B cell (primary cell): ENCODE measurements at regions of chr4 and their contacts with region 1.

Region 1: DNA sequence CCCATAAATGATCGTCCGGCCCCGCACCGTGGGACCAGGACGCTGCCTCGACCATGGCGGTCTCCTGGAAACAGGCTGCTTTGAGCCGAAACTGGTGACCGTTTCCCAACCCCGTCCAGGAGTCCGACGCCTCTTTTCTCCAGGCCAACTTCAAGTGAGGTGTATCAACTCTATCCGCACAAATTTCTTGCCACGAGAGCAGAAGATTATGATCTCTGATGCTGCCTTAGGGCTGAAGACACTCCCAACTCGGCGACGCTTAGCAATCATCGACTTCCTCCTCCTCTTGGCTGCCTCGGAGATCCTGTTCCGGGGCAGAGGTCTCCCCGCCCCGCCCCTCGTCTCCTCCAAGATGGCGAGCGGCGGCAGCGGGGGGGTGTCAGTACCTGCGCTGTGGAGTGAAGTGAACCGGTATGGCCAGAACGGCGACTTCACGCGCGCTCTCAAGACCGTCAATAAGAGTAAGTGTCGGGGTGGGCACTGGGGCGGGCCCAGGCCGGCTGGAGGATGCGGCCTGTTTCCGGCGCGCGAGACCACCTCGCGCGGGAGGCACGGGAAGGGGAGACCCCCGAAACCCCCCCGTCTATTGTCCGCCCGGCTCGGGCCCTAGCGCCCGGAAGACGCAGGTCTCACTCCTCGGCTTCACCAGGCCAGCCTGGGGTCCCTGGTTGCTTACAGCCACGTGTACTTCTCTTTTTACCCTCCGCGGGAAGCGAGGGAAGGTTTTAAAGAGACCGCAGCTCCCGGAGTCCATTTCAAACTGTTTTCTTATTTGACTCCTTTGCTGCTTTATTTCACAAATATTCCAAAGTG is at the start of gene SRP72:
- DNase-seq: peak; percentile 91
- ATAC-seq: peak; percentile 96
- H3K4me3 ChIP-seq: peak within 1 kb of the TSS; percentile 83 to 97 (median 89)
- H3K4me3 Mint-ChIP-seq: peak within 1 kb of the TSS; percentile 99
- H3K27ac ChIP-seq: peak within 1 kb of the TSS; percentile 73 to 81
- H3K27ac Mint-ChIP-seq: peak within 1 kb of the TSS; percentile 96
- H3K4me1 ChIP-seq: peaks cover 38 to 42% of the 10 kb centered on the region in 2 donors
- H3K4me1 Mint-ChIP-seq: peaks cover 56% of the 10 kb centered on the region
- H3K27me3 ChIP-seq: no peaks in the 10 kb centered on the region
- H3K27me3 Mint-ChIP-seq: no peaks in the 10 kb centered on the region
- CTCF ChIP-seq: no peak
- total RNA-seq, gene SRP72: 111 and 114 TPM in 2 replicates

Region 2: DNA sequence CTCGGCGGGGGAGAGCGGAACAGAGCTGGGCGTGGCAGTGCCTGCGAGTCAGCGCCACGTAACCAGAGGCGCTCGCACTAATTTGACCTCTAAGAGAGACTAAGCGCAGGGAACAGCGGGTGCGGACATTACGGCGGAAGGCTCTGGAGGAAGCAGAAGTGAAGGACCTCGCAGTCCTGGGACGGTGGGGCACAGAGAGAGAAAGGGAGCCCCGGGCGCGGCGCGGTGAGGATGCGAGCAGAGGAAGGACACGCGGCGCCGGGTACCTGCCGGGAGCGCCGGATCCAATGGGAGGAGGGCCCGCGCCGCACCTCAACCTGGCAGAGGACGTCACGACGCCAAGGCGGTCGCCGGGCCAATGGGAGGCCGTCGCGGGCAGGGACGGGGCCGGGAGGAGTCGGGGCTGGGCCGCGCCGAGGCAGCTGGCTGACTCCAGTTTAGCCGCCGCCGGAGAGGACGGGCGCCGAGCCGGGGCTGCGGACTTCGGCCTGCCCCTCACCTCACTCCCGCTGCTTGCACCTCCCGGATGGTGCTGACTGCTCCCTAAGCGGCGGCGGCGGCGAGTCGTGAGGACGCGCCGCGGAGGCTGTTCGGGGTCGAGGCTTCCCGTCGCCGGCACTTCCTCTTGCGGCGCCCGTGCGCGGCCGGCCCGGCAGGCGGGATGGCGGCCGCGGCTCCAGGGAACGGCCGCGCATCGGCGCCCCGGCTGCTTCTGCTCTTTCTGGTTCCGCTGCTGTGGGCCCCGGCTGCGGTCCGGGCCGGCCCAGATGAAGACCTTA is 1071.8 kb before region 1 on chr4 and contains the start of gene TMEM165:
- CTCF ChIA-PET with region 1: no interaction called
- POLR2A ChIA-PET with region 1: no interaction called
- intact Hi-C with region 1: loop called (anchors 10 kb)
- DNase-seq: peak; percentile 94
- ATAC-seq: peak; percentile 91
- H3K4me3 ChIP-seq: peak within 1 kb of the TSS; percentile 67 to 94 (median 77)
- H3K4me3 Mint-ChIP-seq: peak within 1 kb of the TSS; percentile 97
- H3K27ac ChIP-seq: peak within 1 kb of the TSS; percentile 91 to 93
- H3K27ac Mint-ChIP-seq: peak within 1 kb of the TSS; percentile 97
- H3K4me1 ChIP-seq: peaks cover 28 to 33% of the 10 kb centered on the region in 2 donors
- H3K4me1 Mint-ChIP-seq: peaks cover 39% of the 10 kb centered on the region
- H3K27me3 ChIP-seq: no peaks in the 10 kb centered on the region
- H3K27me3 Mint-ChIP-seq: no peaks in the 10 kb centered on the region
- CTCF ChIP-seq: no peak
- total RNA-seq, gene TMEM165: 110 and 113 TPM in 2 replicates

Region 3: DNA sequence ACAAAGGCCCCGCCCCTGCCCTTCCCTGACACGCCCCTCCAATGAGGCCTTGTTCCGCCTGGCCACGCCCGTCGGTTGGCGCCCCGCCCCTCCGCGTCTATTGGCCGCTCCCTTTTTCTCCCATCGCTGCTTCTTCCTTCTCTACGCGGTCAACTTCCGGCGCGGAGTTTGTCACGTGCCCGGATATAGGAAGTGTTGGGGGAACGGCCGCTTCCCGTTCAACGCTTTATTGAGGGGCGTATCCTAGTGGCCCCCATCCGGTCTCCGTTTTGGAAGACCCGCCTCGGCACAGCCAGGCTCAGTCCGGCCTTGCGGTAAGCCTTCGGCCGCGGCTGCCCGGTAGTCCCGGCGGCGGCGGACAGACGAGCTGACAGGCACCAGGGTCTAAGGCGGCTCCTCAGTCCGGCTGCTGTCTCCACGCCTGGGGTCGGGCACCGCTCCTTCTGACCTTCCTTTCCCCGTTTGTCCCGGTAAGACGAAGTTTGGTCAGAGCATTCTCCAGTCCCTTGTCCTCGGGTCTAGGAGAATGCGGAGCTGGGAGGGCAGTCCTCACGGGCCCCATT is 613.9 kb before region 1 on chr4 and contains the start of gene EXOC1:
- CTCF ChIA-PET with region 1: no interaction called
- POLR2A ChIA-PET with region 1: no interaction called
- intact Hi-C with region 1: loop called (anchors 10 kb)
- DNase-seq: peak; percentile 97
- ATAC-seq: peak; percentile 100
- H3K4me3 ChIP-seq: peak within 1 kb of the TSS; percentile 85 to 98 (median 97)
- H3K4me3 Mint-ChIP-seq: no peak within 1 kb of the TSS
- H3K27ac ChIP-seq: peak within 1 kb of the TSS; percentile 71 to 86
- H3K27ac Mint-ChIP-seq: peak within 1 kb of the TSS; percentile 94
- H3K4me1 ChIP-seq: peaks cover 11 to 12% of the 10 kb centered on the region in 2 donors
- H3K4me1 Mint-ChIP-seq: peaks cover 13% of the 10 kb centered on the region
- H3K27me3 ChIP-seq: peaks cover 0 to 14% (median 2%) of the 10 kb centered on the region in 4 experiments
- H3K27me3 Mint-ChIP-seq: peaks cover 12% of the 10 kb centered on the region
- CTCF ChIP-seq: no peak
- total RNA-seq, gene EXOC1: 42.5 and 46.7 TPM in 2 replicates

Region 4: GRCh38 chr4:56400560-56400959 is 66.9 kb before region 1 on chr4:
- CTCF ChIA-PET with region 1: no interaction called
- POLR2A ChIA-PET with region 1: no interaction called
- intact Hi-C with region 1: no loop called
- DNase-seq: no peak
- ATAC-seq: no peak
- H3K4me3 ChIP-seq: no peak overlapping the region
- H3K4me3 Mint-ChIP-seq: no peak overlapping the region
- H3K27ac ChIP-seq: no peak overlapping the region
- H3K27ac Mint-ChIP-seq: no peak overlapping the region
- H3K4me1 ChIP-seq: no peaks in the 10 kb centered on the region
- H3K4me1 Mint-ChIP-seq: no peaks in the 10 kb centered on the region
- H3K27me3 ChIP-seq: no peaks in the 10 kb centered on the region
- H3K27me3 Mint-ChIP-seq: no peaks in the 10 kb centered on the region
- CTCF ChIP-seq: no peak

Region 5: GRCh38 chr4:56435306-56435926 is 32.1 kb before region 1 on chr4 and contains the start of gene PPAT:
- CTCF ChIA-PET with region 1: interaction called, 8 read pairs
- POLR2A ChIA-PET with region 1: interaction called, 35 read pairs
- intact Hi-C with region 1: loop called (anchors 1 kb)
- DNase-seq: peak; percentile 99
- ATAC-seq: peak; percentile 84
- H3K4me3 ChIP-seq: peak within 1 kb of the TSS; percentile 82 to 97 (median 92)
- H3K4me3 Mint-ChIP-seq: peak within 1 kb of the TSS; percentile 96
- H3K27ac ChIP-seq: peak within 1 kb of the TSS; percentile 77 to 83
- H3K27ac Mint-ChIP-seq: peak within 1 kb of the TSS; percentile 99
- H3K4me1 ChIP-seq: peaks cover 16 to 22% of the 10 kb centered on the region in 2 donors
- H3K4me1 Mint-ChIP-seq: peaks cover 29% of the 10 kb centered on the region
- H3K27me3 ChIP-seq: no peaks in the 10 kb centered on the region
- H3K27me3 Mint-ChIP-seq: no peaks in the 10 kb centered on the region
- CTCF ChIP-seq: peak; percentile 19
- total RNA-seq, gene PPAT: 6.7 and 9.2 TPM in 2 replicates

Region 6: GRCh38 chr4:56544573-56545131 is 77.2 kb after region 1 on chr4:
- CTCF ChIA-PET with region 1: no interaction called
- POLR2A ChIA-PET with region 1: no interaction called
- intact Hi-C with region 1: loop called (anchors 1 kb)
- DNase-seq: peak; percentile 88
- ATAC-seq: peak; percentile 100
- H3K4me3 ChIP-seq: peak overlapping the region in 4 of 5 experiments; percentile 17 to 45 (median 38)
- H3K4me3 Mint-ChIP-seq: peak overlapping the region; percentile 77
- H3K27ac ChIP-seq: no peak overlapping the region
- H3K27ac Mint-ChIP-seq: peak overlapping the region; percentile 53
- H3K4me1 ChIP-seq: peaks cover 7% of the 10 kb centered on the region in 2 donors
- H3K4me1 Mint-ChIP-seq: peaks cover 12% of the 10 kb centered on the region
- H3K27me3 ChIP-seq: peaks cover 0 to 5% (median 3%) of the 10 kb centered on the region in 4 experiments
- H3K27me3 Mint-ChIP-seq: peaks cover 13% of the 10 kb centered on the region
- CTCF ChIP-seq: peak; percentile 99

Region 7: GRCh38 chr4:56977321-56978012 is 510.0 kb after region 1 on chr4 and contains the start of gene NOA1:
- CTCF ChIA-PET with region 1: no interaction called
- POLR2A ChIA-PET with region 1: no interaction called
- intact Hi-C with region 1: loop called (anchors 1 kb)
- DNase-seq: peak; percentile 99
- ATAC-seq: peak; percentile 82
- H3K4me3 ChIP-seq: peak within 1 kb of the TSS; percentile 74 to 95 (median 91)
- H3K4me3 Mint-ChIP-seq: peak within 1 kb of the TSS; percentile 100
- H3K27ac ChIP-seq: peak within 1 kb of the TSS; percentile 73 to 84
- H3K27ac Mint-ChIP-seq: peak within 1 kb of the TSS; percentile 98
- H3K4me1 ChIP-seq: peaks cover 35 to 40% of the 10 kb centered on the region in 2 donors
- H3K4me1 Mint-ChIP-seq: peaks cover 57% of the 10 kb centered on the region
- H3K27me3 ChIP-seq: no peaks in the 10 kb centered on the region
- H3K27me3 Mint-ChIP-seq: no peaks in the 10 kb centered on the region
- CTCF ChIP-seq: no peak
- total RNA-seq, gene NOA1: 22.7 and 24.0 TPM in 2 replicates